SK-N-SH (cell line): ENCODE measurements at regions of chr1 and their contacts with region 1.

Region 1: DNA sequence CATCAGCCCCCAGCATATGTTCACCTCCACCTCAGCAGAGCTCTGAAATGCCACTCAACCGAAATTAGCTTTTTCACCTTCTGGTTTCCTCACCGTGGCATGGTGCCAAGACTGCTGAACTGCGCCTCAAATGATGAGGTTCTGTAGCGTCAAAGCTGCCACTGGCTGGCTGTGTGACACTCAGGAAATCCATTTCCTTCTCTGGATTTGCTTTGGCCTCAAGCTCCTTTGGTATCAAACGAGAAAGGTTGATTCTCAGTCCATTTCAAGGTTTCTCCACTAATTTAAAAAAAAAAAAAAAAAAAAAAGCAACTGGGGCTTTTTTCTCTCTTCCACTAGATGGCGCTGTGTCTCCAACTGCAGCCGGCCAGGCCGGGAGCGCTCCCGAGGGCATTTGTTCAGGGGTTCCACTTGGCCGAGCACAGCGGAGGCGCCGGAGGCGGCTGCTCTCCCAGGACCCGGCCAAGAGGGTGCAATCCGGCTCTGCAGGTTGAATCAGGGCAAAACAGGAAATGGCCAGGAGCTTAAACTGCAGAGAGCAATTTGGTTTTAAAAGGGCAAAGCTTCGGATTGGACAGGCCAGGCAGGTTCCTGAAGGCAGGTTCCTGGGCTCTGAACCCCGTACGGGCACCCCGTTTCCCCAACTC is 26.5 kb upstream of the PLA2G2C start:
- DNase-seq: peak; percentile 82
- H3K4me3 ChIP-seq: no peak overlapping the region; a peak in 1 of 4 replicates
- H3K27ac ChIP-seq: no peak overlapping the region
- H3K4me1 ChIP-seq: peaks cover 0 to 11% of the 10 kb centered on the region in 2 experiments; a peak in 1 of 4 replicates
- H3K27me3 ChIP-seq: peaks cover 24% of the 10 kb centered on the region
- CTCF ChIP-seq: peak; percentile 84
- EP300 ChIP-seq: no peak
- RAD21 ChIP-seq: peak; percentile 82

Region 2: GRCh38 chr1:20202171-20202570 is 10.6 kb before region 1 on chr1:
- CTCF ChIA-PET with region 1: interaction called, 21 read pairs
- POLR2A ChIA-PET with region 1: no interaction called
- DNase-seq: no peak
- H3K4me3 ChIP-seq: no peak overlapping the region
- H3K27ac ChIP-seq: no peak overlapping the region
- H3K4me1 ChIP-seq: no peaks in the 10 kb centered on the region
- H3K27me3 ChIP-seq: peaks cover 21% of the 10 kb centered on the region; the same call in 1 of the 2 replicates
- CTCF ChIP-seq: no peak
- EP300 ChIP-seq: no peak
- RAD21 ChIP-seq: no peak

Region 3: GRCh38 chr1:20259646-20260045 is 46.8 kb after region 1 on chr1:
- CTCF ChIA-PET with region 1: interaction called, 24 read pairs
- POLR2A ChIA-PET with region 1: no interaction called
- DNase-seq: peak; percentile 69
- H3K4me3 ChIP-seq: no peak overlapping the region
- H3K27ac ChIP-seq: peak overlapping the region in 1 of 2 experiments; percentile 77; a peak in 2 of 4 replicates
- H3K4me1 ChIP-seq: peaks cover 0 to 26% of the 10 kb centered on the region in 2 experiments; a peak in 2 of 4 replicates
- H3K27me3 ChIP-seq: peaks cover 11% of the 10 kb centered on the region; the same call in 1 of the 2 replicates
- CTCF ChIP-seq: no peak
- EP300 ChIP-seq: peak in 1 of 2 experiments; percentile 72; a peak in 2 of 4 replicates
- RAD21 ChIP-seq: peak; percentile 25; the same call in 1 of the 2 replicates

Region 4: GRCh38 chr1:20281801-20282200 is 69.0 kb after region 1 on chr1:
- CTCF ChIA-PET with region 1: interaction called, 11 read pairs
- POLR2A ChIA-PET with region 1: no interaction called
- DNase-seq: no peak
- H3K4me3 ChIP-seq: no peak overlapping the region
- H3K27ac ChIP-seq: no peak overlapping the region
- H3K4me1 ChIP-seq: peaks cover 0 to 13% of the 10 kb centered on the region in 2 experiments; a peak in 1 of 4 replicates
- H3K27me3 ChIP-seq: peaks cover 8% of the 10 kb centered on the region; the same call in 1 of the 2 replicates
- CTCF ChIP-seq: no peak
- EP300 ChIP-seq: no peak
- RAD21 ChIP-seq: no peak

Region 5: DNA sequence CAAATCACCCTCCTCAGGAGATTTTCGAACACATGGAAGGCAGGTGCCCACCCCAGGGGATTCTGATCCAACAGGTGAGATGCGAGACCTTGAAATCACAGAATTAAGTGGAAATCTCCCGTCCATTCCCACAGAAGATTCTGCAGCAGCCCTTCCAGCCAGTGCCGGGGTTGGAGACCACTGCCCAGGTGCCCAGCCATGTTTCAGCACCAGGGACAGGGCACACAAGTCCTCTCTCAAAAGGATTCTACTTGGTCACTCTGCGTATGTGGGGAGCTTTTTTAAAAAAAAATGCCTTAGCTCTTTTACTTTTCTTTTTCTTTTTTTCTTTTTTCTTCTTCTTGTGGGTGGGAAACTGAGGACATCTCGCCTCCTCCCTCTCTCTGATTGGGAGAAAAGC is 158.6 kb after region 1 on chr1:
- CTCF ChIA-PET with region 1: interaction called, 16 read pairs
- POLR2A ChIA-PET with region 1: no interaction called
- DNase-seq: no peak
- H3K4me3 ChIP-seq: no peak overlapping the region
- H3K27ac ChIP-seq: no peak overlapping the region
- H3K4me1 ChIP-seq: peaks cover 0 to 4% of the 10 kb centered on the region in 2 experiments; a peak in 2 of 4 replicates
- H3K27me3 ChIP-seq: peaks cover 16% of the 10 kb centered on the region
- CTCF ChIP-seq: no peak
- EP300 ChIP-seq: no peak
- RAD21 ChIP-seq: no peak

Region 6: GRCh38 chr1:20430355-20431175 is 217.8 kb after region 1 on chr1:
- CTCF ChIA-PET with region 1: interaction called, 101 read pairs
- POLR2A ChIA-PET with region 1: no interaction called
- DNase-seq: peak; percentile 86
- H3K4me3 ChIP-seq: peak overlapping the region in 1 of 2 experiments; percentile 43; a peak in 1 of 4 replicates
- H3K27ac ChIP-seq: no peak overlapping the region
- H3K4me1 ChIP-seq: no peaks in the 10 kb centered on the region; a peak in 2 of 4 replicates
- H3K27me3 ChIP-seq: no peaks in the 10 kb centered on the region
- CTCF ChIP-seq: peak; percentile 81
- EP300 ChIP-seq: no peak
- RAD21 ChIP-seq: peak; percentile 88

Region 7: DNA sequence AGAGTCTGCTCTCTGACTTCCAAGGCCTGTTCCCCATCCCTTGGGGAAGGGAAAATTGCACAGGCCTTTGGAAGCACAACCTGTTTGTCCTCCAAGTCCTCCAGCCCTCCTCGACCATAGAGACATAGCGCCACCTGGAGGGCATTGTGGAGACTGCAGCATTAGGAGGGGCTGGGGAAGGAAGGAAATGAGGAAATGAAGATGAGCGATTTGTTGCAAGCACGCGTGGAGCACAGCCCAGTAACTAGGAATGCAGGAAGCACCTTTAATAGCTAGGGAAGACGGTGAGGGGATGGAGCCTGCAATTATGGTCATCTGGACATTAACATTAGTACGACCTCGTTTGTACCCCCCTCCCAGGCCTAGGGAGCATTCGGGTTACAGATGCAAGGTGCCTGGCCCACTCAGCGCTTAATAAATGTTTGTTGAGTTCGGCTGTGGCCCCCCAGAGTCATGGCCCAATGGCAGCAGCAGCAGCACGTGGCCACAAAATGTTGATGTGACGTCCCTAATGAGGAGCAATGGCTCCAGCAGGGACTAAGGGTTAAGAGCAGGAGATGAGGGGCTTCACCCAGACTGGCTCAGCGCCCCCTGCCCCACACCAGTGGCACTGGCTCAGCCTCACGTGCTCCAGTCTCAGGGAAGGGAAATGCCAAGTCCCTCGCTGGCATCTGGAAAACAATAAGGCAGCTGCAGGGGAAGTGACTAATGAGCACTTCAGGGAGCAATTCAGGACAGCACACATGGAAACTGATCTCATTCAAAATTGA is 281.2 kb after region 1 on chr1:
- CTCF ChIA-PET with region 1: interaction called, 286 read pairs
- POLR2A ChIA-PET with region 1: no interaction called
- DNase-seq: peak; percentile 88
- H3K4me3 ChIP-seq: peak overlapping the region in 1 of 2 experiments; percentile 26; a peak in 2 of 4 replicates
- H3K27ac ChIP-seq: peak overlapping the region; percentile 9 to 40; a peak in 1 of 4 replicates
- H3K4me1 ChIP-seq: peaks cover 11 to 16% of the 10 kb centered on the region in 2 experiments; a peak in 3 of 4 replicates
- H3K27me3 ChIP-seq: no peaks in the 10 kb centered on the region
- CTCF ChIP-seq: peak; percentile 95
- EP300 ChIP-seq: no peak; a peak in 1 of 4 replicates
- RAD21 ChIP-seq: peak; percentile 100